ENCODE measurements at regions of chr6 and their contacts with region 1.

Region 1: GRCh38 chr6:37691904-37692806 is 5.5 kb downstream of the MDGA1 start:
- DNase-seq: peak; percentile 88
- H3K4me3 Mint-ChIP-seq: no peak overlapping the region
- H3K27ac Mint-ChIP-seq: no peak overlapping the region
- H3K4me1 Mint-ChIP-seq: peaks cover 14% of the 10 kb centered on the region
- H3K27me3 Mint-ChIP-seq: peaks cover 70% of the 10 kb centered on the region
- CTCF ChIP-seq: peak; percentile 99

Region 2: GRCh38 chr6:37483917-37484785 is 208.0 kb before region 1 on chr6:
- CTCF ChIA-PET with region 1: interaction called, 3 read pairs
- intact Hi-C with region 1: loop called (anchors 5 kb)
- DNase-seq: peak; percentile 73
- H3K4me3 Mint-ChIP-seq: no peak overlapping the region
- H3K27ac Mint-ChIP-seq: no peak overlapping the region
- H3K4me1 Mint-ChIP-seq: no peaks in the 10 kb centered on the region
- H3K27me3 Mint-ChIP-seq: no peaks in the 10 kb centered on the region
- CTCF ChIP-seq: peak; percentile 88

Region 3: DNA sequence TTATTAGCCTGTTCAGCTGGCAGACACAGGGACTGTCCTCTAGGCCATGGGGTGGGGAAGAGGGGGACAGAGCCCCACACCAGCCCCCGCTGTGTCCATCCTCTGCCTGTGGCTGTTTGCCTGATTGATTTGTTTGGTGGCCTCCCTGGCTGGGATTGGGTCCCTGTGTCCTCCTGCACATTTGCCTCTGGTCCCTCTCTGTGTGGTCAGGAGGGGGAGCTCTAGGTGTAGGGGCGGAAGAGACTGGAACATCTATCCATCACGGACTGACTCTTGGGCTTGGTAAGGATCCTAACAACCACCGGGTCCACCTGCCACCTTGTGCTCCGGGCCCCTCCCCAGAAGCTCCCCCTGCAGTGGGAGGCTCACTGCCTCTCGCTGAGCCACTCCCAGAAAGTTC is 154.0 kb before region 1 on chr6:
- CTCF ChIA-PET with region 1: interaction called, 18 read pairs
- intact Hi-C with region 1: loop called (anchors 1 kb)
- DNase-seq: peak; percentile 79
- H3K4me3 Mint-ChIP-seq: no peak overlapping the region
- H3K27ac Mint-ChIP-seq: no peak overlapping the region
- H3K4me1 Mint-ChIP-seq: no peaks in the 10 kb centered on the region
- H3K27me3 Mint-ChIP-seq: peaks cover 98% of the 10 kb centered on the region
- CTCF ChIP-seq: peak; percentile 75

Region 4: DNA sequence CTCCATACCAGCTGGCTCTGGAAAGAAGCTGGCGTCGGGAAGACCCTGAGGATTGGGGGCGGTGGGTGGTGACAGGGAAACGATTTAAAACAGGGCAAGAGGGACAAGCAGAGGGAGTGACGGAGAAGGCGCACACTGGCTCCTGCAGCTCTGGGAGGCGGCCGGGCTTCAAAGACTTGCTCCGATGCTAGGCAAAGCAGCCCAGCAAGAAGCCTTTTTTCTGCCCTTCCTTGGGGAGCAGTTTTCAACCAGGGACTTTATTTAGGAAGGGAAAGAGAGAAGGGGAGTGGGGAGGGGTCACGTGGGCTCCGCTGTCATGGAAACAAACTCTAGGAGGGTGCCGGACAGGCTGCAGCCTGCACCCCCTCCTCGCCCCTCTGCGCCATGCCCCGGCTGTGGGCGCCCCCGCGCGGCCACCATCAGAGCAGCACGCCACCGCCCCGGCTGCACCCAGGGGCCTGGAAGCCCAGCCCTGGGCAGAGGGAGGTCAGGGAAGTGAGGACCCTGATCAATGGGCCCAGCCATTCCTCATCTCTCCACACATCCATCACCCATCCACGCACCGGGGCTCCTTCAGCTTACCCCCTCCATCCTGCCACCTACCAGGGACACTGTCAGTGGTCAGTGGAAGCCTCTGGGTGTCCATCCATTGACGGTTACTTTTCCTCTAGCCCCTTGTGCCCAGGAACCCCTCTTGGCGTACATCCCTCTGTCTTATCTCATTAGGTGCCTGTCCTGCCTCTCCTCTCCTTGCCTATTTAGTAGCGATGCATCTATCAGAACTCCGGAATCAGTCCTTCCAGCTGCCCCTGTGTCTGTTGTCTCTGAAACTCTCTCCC is 125.8 kb before region 1 on chr6:
- CTCF ChIA-PET with region 1: interaction called, 4 read pairs
- intact Hi-C with region 1: loop called (anchors 1 kb)
- DNase-seq: peak; percentile 81
- H3K4me3 Mint-ChIP-seq: no peak overlapping the region
- H3K27ac Mint-ChIP-seq: no peak overlapping the region
- H3K4me1 Mint-ChIP-seq: no peaks in the 10 kb centered on the region
- H3K27me3 Mint-ChIP-seq: peaks cover 89% of the 10 kb centered on the region
- CTCF ChIP-seq: peak; percentile 96

Region 5: GRCh38 chr6:37607944-37608343 is 84.2 kb before region 1 on chr6:
- CTCF ChIA-PET with region 1: interaction called, 6 read pairs
- intact Hi-C with region 1: loop called (anchors 1 kb)
- DNase-seq: no peak
- H3K4me3 Mint-ChIP-seq: no peak overlapping the region
- H3K27ac Mint-ChIP-seq: no peak overlapping the region
- H3K4me1 Mint-ChIP-seq: no peaks in the 10 kb centered on the region
- H3K27me3 Mint-ChIP-seq: peaks cover 92% of the 10 kb centered on the region
- CTCF ChIP-seq: peak; percentile 48

Region 6: DNA sequence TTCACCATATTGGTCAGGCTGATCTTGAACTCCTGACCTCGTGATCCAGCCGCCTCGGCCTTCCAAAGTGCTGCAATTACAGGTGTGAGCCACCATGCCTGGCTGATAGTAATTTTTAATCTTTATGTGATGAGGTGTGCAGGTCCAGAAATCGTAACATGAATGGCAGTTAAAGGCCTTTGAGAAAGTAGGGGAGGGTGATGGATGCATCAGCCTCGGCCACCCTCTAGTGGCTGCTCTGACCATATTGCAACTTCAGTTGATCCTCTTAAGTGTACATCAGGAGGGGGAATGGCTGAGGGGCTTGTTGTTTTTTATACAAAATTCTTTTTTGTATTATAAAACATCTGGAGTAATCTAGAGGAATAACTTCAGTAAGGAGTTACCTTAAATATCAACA is 320.4 kb after region 1 on chr6:
- CTCF ChIA-PET with region 1: no interaction called
- intact Hi-C with region 1: loop called (anchors 10 kb)
- DNase-seq: peak; percentile 54
- H3K4me3 Mint-ChIP-seq: no peak overlapping the region
- H3K27ac Mint-ChIP-seq: no peak overlapping the region
- H3K4me1 Mint-ChIP-seq: no peaks in the 10 kb centered on the region
- H3K27me3 Mint-ChIP-seq: no peaks in the 10 kb centered on the region
- CTCF ChIP-seq: peak; percentile 85

Region 7: GRCh38 chr6:38493931-38494547 is 801.9 kb after region 1 on chr6:
- CTCF ChIA-PET with region 1: no interaction called
- intact Hi-C with region 1: loop called (anchors 10 kb)
- DNase-seq: peak; percentile 78
- H3K4me3 Mint-ChIP-seq: no peak overlapping the region
- H3K27ac Mint-ChIP-seq: no peak overlapping the region
- H3K4me1 Mint-ChIP-seq: peaks cover 7% of the 10 kb centered on the region
- H3K27me3 Mint-ChIP-seq: no peaks in the 10 kb centered on the region
- CTCF ChIP-seq: peak; percentile 92

Measured in Calu3 (cell line).